Activated CD4-positive, alpha-beta T cell treated with anti-CD3 and anti-CD28 coated beads for 36 hours (primary cell): ENCODE measurements at regions of chr3 and their contacts with region 1.

Region 1: DNA sequence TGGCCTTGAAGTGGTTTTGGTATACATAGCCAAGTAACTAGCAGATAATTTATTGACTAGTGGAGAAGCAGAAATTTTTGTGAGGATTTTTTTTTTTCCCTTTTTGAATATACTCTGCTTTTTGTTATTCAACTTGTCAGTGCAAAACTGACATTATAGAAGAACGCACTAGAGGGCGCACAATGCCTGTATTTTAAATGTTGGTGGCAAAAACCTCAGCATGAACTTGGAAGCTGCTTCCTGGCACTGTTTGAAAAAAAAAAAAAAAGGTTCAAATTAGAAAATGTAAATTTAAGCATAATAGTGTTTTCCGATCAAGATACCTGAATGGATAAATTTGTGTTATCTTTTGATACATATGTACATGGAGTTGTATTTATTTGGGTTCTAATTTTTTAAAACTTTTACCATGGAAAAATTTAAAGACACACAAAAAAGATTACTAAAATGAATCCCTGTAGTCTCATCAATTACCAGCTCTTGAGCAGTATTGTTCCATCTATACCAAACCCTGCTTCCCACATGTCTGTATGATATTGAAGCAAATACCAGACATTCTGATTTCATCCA is 56.0 kb downstream of the SLC25A26 start:
- DNase-seq: peak; percentile 69
- ATAC-seq: no peak
- H3K4me3 Mint-ChIP-seq: no peak overlapping the region
- H3K27ac Mint-ChIP-seq: no peak overlapping the region
- H3K4me1 Mint-ChIP-seq: peaks cover 24% of the 10 kb centered on the region
- H3K27me3 Mint-ChIP-seq: no peaks in the 10 kb centered on the region

Region 2: GRCh38 chr3:66372681-66373350 is 96.0 kb after region 1 on chr3:
- CTCF ChIA-PET with region 1: interaction called, 24 read pairs
- POLR2A ChIA-PET with region 1: interaction called, 3 read pairs
- intact Hi-C with region 1: loop called (anchors 1 to 2 kb)
- DNase-seq: peak; percentile 46
- ATAC-seq: peak; percentile 68
- H3K4me3 Mint-ChIP-seq: no peak overlapping the region
- H3K27ac Mint-ChIP-seq: no peak overlapping the region
- H3K4me1 Mint-ChIP-seq: peaks cover 3% of the 10 kb centered on the region
- H3K27me3 Mint-ChIP-seq: no peaks in the 10 kb centered on the region

Region 3: DNA sequence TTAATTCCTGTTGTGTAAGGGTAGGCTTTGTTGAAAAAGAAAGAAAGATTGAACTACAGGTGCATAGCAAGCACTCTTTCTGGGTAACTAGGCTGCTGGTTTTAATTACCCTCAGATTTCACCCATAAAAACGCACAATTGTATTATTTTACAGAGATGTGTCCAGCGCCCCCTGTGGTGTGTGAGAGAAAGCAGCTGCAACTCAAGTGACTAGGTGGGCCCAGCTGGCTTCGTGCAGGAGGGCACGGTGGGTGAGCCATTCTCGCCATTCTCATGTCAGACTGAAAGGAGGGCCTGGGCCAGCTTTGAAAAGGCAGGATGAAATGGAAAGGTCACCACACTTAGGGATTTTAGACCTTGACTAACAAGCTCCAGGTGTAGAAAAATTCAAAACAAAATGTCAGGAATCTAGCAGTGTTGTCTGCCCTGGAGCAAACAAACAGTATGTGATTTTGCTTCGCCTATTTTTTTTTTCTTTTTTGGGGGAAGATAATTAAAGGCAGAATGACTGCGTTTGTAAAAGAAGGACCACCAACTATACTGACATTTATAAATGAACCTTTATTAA is 101.5 kb after region 1 on chr3:
- CTCF ChIA-PET with region 1: interaction called, 24 read pairs
- POLR2A ChIA-PET with region 1: interaction called, 3 read pairs
- intact Hi-C with region 1: loop called (anchors 1 to 2 kb)
- DNase-seq: peak; percentile 56
- ATAC-seq: peak; percentile 30
- H3K4me3 Mint-ChIP-seq: no peak overlapping the region
- H3K27ac Mint-ChIP-seq: peak overlapping the region; percentile 67
- H3K4me1 Mint-ChIP-seq: peaks cover 8% of the 10 kb centered on the region
- H3K27me3 Mint-ChIP-seq: no peaks in the 10 kb centered on the region

Region 4: GRCh38 chr3:66407611-66408218 is 130.9 kb after region 1 on chr3:
- CTCF ChIA-PET with region 1: interaction called, 3 read pairs
- POLR2A ChIA-PET with region 1: no interaction called
- intact Hi-C with region 1: loop called in 1 of 2 experiments (anchors 10 kb)
- DNase-seq: peak; percentile 85
- ATAC-seq: peak; percentile 97
- H3K4me3 Mint-ChIP-seq: no peak overlapping the region
- H3K27ac Mint-ChIP-seq: no peak overlapping the region
- H3K4me1 Mint-ChIP-seq: no peaks in the 10 kb centered on the region
- H3K27me3 Mint-ChIP-seq: no peaks in the 10 kb centered on the region

Region 5: DNA sequence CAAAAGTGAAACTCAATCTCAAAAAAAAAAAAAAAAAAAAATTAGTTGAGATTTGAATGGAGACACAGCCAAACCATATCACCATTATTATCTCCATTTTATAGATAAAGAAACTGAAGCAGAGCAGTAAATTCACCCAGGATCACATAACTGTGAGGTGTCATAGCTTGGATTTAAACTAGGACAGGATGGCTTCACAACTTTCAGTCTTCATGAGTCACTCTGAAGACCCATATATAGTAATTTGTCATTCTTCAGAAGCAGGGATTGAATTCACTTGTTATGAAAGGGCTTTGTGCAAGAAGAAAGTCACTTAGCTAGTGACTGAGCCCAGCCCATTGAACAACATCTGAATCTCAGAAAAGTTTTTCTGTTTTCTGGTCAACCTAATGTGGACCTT is 284.6 kb after region 1 on chr3:
- CTCF ChIA-PET with region 1: no interaction called
- POLR2A ChIA-PET with region 1: no interaction called
- intact Hi-C with region 1: no loop called
- DNase-seq: no peak
- ATAC-seq: peak; percentile 91
- H3K4me3 Mint-ChIP-seq: no peak overlapping the region
- H3K27ac Mint-ChIP-seq: no peak overlapping the region
- H3K4me1 Mint-ChIP-seq: no peaks in the 10 kb centered on the region
- H3K27me3 Mint-ChIP-seq: no peaks in the 10 kb centered on the region

Region 6: DNA sequence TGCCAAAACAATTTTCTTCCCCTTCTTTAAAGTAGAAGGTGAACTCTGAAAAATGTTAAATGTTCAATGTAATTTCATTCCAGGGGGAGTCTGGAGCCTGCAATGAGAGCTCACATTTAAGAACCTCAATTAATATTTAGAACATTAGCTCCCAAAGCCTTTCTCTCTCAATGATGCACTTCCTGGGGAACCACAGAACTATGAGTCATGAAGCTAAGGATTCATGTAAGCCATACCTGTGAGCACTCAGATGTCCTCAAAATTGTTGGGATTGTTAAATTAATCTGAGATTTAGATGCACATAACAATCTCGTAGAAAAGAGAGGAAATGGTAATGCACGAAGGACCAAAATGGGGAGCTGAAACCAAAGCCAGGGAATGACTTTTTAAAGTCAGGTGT is 468.2 kb after region 1 on chr3:
- CTCF ChIA-PET with region 1: no interaction called
- POLR2A ChIA-PET with region 1: no interaction called
- intact Hi-C with region 1: loop called in 1 of 2 experiments (anchors 5 kb)
- DNase-seq: no peak
- ATAC-seq: no peak
- H3K4me3 Mint-ChIP-seq: no peak overlapping the region
- H3K27ac Mint-ChIP-seq: no peak overlapping the region
- H3K4me1 Mint-ChIP-seq: no peaks in the 10 kb centered on the region
- H3K27me3 Mint-ChIP-seq: peaks cover 4% of the 10 kb centered on the region

Region 7: GRCh38 chr3:66816090-66816761 is 539.4 kb after region 1 on chr3:
- CTCF ChIA-PET with region 1: interaction called, 20 read pairs
- POLR2A ChIA-PET with region 1: no interaction called
- intact Hi-C with region 1: loop called (anchors 1 kb)
- DNase-seq: no peak
- ATAC-seq: peak; percentile 74
- H3K4me3 Mint-ChIP-seq: no peak overlapping the region
- H3K27ac Mint-ChIP-seq: no peak overlapping the region
- H3K4me1 Mint-ChIP-seq: no peaks in the 10 kb centered on the region
- H3K27me3 Mint-ChIP-seq: peaks cover 7% of the 10 kb centered on the region

Region 8: GRCh38 chr3:66822186-66823008 is 545.6 kb after region 1 on chr3:
- CTCF ChIA-PET with region 1: interaction called, 15 read pairs
- POLR2A ChIA-PET with region 1: no interaction called
- intact Hi-C with region 1: loop called in 1 of 2 experiments (anchors 1 kb)
- DNase-seq: peak; percentile 79
- ATAC-seq: peak; percentile 84
- H3K4me3 Mint-ChIP-seq: no peak overlapping the region
- H3K27ac Mint-ChIP-seq: no peak overlapping the region
- H3K4me1 Mint-ChIP-seq: no peaks in the 10 kb centered on the region
- H3K27me3 Mint-ChIP-seq: peaks cover 3% of the 10 kb centered on the region